ENCODE measurements at regions of chr12 and their contacts with region 1.

Region 1: DNA sequence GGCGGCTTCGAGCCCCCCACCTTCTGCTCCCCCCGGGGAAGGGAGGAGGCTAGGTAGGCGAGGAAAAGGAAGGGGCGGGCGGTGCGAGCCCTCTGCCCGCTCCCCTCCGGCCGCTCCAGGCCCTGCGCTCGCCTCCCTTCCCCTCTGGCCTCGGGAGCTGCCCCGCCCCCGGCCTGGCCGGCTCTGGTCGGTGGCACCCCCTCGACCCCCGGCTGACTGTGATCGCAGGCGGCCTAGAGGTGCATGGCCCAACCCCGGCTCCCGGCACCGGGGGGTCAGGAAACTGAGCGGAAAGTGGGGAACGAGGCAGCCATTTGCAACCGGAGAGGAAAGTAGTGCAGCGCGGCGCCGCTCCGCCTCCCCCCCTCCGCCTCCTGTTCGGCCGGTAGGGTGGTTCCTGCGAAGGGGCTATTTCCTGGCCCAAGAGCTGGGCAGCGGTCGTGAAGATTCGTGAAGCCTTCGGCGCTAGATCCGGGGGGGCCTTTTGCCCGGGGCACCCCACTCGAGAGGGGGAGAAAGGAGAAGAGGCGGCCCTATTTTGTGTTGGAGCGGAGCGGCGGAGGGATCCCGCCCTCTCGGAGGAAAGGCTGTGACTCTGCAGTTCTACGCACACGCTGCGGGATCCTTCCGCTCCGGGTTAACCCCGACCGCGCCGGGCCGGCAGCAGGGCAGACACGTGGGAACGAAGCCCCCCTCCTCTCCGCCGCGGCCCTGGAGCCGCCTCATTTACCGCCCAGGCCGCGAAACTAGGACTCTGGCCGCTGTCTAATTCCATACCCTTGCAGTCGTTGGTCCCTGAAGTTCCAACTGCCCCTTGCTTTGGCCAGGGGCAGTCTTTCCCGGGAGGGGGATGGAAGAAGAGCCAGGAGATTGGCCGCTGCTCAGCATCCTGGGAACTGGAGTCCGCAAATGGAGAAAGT is at the start of gene KMT2D:
- DNase-seq: peak; percentile 92
- ATAC-seq: peak; percentile 82
- H3K4me3 Mint-ChIP-seq: peak within 1 kb of the TSS; percentile 91
- H3K27ac Mint-ChIP-seq: peak within 1 kb of the TSS; percentile 95
- H3K4me1 Mint-ChIP-seq: peaks cover 51% of the 10 kb centered on the region
- H3K27me3 Mint-ChIP-seq: no peaks in the 10 kb centered on the region
- total RNA-seq, gene KMT2D: 107 to 132 TPM

Region 2: DNA sequence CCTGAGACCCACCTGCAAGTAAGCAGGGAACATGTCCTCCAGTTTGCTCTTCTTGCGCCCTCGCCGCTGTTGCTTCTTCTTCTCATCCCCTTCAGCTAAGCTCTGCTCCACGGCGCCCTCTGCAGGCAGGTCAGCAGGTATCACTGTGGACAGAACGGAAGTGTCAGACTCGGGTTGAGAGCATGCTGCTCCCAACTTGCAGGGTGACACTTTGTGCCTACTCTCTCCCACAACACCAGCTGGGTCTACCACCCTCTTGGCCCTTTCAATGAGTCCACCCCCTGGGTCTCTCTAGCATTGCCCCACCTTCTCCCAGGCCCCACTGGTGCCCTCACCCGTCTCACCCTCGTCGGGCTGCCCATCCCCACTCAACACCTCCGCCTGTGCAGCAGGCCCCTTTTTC is 16.6 kb before region 1 on chr12:
- CTCF ChIA-PET with region 1: interaction called, 18 read pairs
- DNase-seq: peak; percentile 87
- ATAC-seq: peak; percentile 87
- H3K4me3 Mint-ChIP-seq: no peak overlapping the region
- H3K27ac Mint-ChIP-seq: peak overlapping the region; percentile 0
- H3K4me1 Mint-ChIP-seq: peaks cover 8% of the 10 kb centered on the region
- H3K27me3 Mint-ChIP-seq: no peaks in the 10 kb centered on the region

Region 3: DNA sequence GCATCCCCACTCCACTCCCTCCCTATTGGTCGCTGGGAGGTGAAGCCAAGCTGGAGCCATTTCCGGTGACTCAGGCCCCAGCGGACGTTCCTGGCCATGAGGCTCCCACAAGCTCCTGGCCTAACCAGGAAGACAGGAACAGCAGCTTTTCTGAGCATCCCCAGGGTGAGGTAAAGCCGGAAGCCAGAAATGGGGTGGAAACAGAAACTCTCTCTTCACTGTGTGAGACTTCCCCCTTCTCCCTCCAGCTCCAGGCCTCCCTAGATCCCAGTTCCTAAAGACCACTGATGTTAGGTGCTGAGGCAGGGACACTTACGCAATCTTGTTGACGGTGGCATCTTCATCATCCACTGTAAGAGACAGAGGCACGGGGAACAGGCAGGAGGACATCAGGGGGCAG is 45.1 kb after region 1 on chr12:
- CTCF ChIA-PET with region 1: interaction called, 222 read pairs
- DNase-seq: no peak
- ATAC-seq: no peak
- H3K4me3 Mint-ChIP-seq: no peak overlapping the region
- H3K27ac Mint-ChIP-seq: no peak overlapping the region
- H3K4me1 Mint-ChIP-seq: peaks cover 25% of the 10 kb centered on the region
- H3K27me3 Mint-ChIP-seq: no peaks in the 10 kb centered on the region

Region 4: DNA sequence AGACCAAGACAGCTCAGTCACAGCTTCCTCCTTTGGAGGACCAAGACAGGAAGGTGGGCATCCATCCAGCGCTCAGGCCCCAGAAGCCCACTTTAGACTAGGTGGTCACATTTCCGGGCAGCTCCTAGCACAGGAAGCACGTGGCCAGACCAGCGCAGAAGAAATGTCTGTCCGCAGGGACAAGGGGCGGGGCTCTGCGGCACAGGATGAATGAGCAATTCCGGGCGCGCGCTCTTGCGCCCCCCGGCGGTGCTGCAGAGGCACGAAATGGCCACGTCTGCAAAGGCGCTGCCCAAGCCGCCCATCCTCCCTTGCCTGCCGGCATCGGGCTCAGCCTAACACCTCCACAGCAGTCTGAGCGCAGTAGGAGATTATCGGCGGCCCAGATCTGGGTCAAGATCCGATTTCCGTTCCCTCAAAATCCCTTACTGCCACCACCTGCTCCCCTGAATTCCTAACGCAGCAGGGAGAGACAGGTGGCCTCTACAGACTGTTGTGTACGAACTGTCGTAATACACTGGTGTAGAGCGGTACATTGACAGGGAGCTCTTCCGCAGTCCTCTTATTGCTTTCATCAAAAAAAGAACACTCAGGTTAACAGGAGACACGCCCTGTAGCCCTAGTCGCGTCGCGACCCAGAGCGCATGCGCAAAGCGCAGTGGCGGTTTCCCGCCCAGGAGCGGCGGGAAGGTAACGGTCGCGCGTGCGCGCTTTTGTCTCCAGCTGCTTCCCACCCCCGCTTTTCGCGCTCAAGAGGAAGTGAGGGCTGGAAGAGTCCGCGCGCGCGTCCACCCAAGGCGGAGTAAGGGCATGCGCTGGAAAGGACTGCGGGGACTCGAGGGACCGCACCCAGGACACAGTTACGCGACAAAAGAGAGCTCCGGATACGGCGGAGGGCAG is 69.9 kb after region 1 on chr12:
- CTCF ChIA-PET with region 1: interaction called, 16 read pairs
- DNase-seq: peak; percentile 95
- ATAC-seq: peak; percentile 63
- H3K4me3 Mint-ChIP-seq: peak overlapping the region; percentile 84
- H3K27ac Mint-ChIP-seq: peak overlapping the region; percentile 99
- H3K4me1 Mint-ChIP-seq: peaks cover 51% of the 10 kb centered on the region
- H3K27me3 Mint-ChIP-seq: peaks cover 6% of the 10 kb centered on the region

Measured in activated CD8-positive, alpha-beta memory T cell treated with anti-CD3 and anti-CD28 coated beads, Interleukin-2, amount 10 ng/mL, durations not matched to agents 7 days and 5 days (primary cell).